Panc1 (cell line): ENCODE measurements at regions of chr2 and their contacts with region 1.

Region 1: DNA sequence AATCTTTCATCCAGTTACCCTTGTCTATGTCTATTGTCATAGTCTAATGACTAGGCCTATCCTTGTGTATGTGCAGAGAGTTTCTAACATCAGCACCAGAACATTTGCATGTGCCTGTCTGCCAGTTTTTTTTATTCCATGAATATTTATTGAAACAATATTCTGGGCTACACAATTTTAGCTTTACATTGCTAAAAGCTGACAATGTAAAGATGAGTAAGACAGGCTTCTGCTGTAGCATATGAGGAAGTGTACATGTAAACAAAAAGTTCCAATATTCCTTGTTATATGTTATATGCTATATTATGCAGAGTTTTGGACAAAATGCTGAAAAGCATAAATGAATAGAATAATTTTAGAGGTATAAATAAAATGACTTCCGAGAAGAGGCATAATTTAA is 357.7 kb downstream of the NYAP2 start:
- DNase-seq: no peak
- ATAC-seq: no peak
- H3K4me3 ChIP-seq: no peak overlapping the region
- H3K27ac ChIP-seq: no peak overlapping the region
- H3K4me1 ChIP-seq: no peaks in the 10 kb centered on the region
- H3K27me3 ChIP-seq: no peaks in the 10 kb centered on the region
- CTCF ChIP-seq: no peak

Region 2: DNA sequence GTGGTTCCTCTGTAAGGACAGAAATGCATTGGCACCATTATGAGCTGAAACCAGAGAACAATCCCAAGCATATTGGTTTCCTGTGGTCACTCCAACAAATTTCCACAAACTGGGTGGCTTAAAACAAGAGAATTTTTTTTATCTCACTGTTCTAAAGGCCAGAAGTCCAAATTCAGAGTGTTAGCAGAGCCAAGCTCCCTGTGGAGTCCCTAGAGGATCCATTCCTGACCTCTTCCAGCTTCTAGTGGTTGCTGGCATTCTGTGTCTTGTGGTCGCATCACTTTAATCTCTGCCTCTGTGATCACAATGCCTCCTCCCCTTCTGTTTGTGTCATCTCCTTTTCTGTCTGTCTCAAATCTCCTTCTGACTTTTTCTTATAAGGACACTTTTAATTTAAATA is 22.6 kb after region 1 on chr2:
- CTCF ChIA-PET with region 1: no interaction called
- POLR2A ChIA-PET with region 1: interaction called, 18 read pairs
- in situ Hi-C with region 1: no loop called
- intact Hi-C with region 1: no loop called
- DNase-seq: no peak
- ATAC-seq: no peak
- H3K4me3 ChIP-seq: no peak overlapping the region
- H3K27ac ChIP-seq: no peak overlapping the region
- H3K4me1 ChIP-seq: no peaks in the 10 kb centered on the region
- H3K27me3 ChIP-seq: no peaks in the 10 kb centered on the region
- CTCF ChIP-seq: no peak

Region 3: GRCh38 chr2:226079671-226080181 is 322.5 kb after region 1 on chr2:
- CTCF ChIA-PET with region 1: no interaction called
- POLR2A ChIA-PET with region 1: no interaction called
- in situ Hi-C with region 1: no loop called
- intact Hi-C with region 1: no loop called
- DNase-seq: peak; percentile 4
- ATAC-seq: no peak
- H3K4me3 ChIP-seq: no peak overlapping the region
- H3K27ac ChIP-seq: peak overlapping the region; percentile 19; the same call in 1 of the 2 replicates
- H3K4me1 ChIP-seq: no peaks in the 10 kb centered on the region
- H3K27me3 ChIP-seq: no peaks in the 10 kb centered on the region
- CTCF ChIP-seq: no peak